Vagina (tissue), 2 donors: ENCODE measurements at regions of chr19 and their contacts with region 1.

Region 1: GRCh38 chr19:33908646-33909045 is 112.0 kb downstream of the KCTD15 start:
- DNase-seq: no peak
- H3K4me3 ChIP-seq: no peak overlapping the region
- H3K27ac ChIP-seq: no peak overlapping the region
- H3K4me1 ChIP-seq: peaks cover 14% of the 10 kb centered on the region
- H3K27me3 ChIP-seq: no peaks in the 10 kb centered on the region
- CTCF ChIP-seq: no peak
- POLR2A ChIP-seq: no peak

Region 2: DNA sequence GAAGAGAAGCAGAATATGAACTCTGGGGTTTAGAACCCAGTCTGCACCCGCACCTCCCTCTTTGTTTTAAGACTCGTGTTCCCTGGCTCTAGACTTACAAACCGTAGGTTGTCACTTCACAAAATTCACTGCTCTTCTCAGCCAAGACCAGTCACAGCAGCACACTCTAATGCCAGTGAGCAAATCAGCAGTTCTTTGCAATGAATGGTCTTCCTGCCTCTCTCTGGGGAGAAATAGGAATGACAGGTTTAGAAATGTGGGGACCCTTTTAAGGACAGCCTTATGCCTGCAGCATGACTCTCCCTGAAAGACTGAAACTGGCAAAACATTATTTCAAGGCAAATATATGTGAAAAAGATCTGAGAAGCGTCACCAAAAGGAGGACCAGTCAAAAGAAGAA is 44.9 kb after region 1 on chr19:
- intact Hi-C with region 1: loop called (anchors 2 kb)
- DNase-seq: no peak
- H3K4me3 ChIP-seq: no peak overlapping the region
- H3K27ac ChIP-seq: no peak overlapping the region
- H3K4me1 ChIP-seq: no peaks in the 10 kb centered on the region
- H3K27me3 ChIP-seq: no peaks in the 10 kb centered on the region
- CTCF ChIP-seq: no peak
- POLR2A ChIP-seq: no peak